Activated naive CD4-positive, alpha-beta T cell treated with anti-CD3 and anti-CD28 coated beads for 36 hours (primary cell): ENCODE measurements at regions of chr11 and their contacts with region 1.

Region 1: DNA sequence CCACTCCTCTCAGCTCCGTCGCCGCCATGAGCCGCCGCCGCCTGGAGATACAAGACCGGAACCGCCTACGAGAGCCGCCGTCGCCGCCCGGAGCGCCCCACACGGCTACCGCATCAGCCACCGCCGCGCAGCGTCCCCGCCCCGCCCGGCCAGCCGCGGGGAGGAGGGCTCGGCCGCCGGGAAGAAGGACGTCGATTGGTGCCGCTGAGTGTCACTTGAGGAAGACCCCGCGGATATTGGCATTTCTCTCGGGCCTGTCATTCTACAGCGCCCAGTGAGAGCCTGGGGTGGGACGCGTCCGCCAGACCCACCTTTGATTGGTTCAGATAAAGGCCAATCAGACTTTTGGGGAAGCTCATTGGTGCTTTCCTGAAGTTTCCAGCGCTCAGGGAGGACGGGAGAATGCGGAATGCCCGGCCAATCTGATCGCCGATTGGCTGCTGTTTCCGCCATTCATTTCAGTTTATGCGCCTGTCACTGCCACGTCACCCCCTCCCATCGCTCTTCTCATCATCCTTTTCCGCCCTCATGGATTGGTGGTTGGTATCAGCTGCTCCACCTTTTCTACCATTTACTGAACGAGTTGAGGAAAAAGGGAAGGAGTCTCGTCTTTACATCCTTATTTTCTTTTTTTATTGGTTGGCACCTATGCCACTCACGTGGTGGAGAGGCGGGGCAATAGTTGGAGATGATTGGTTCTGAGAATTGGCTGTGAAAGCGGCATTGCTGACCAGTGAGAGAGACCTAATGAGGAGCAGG is at the start of gene OSBP:
- DNase-seq: peak; percentile 99
- H3K4me3 Mint-ChIP-seq: peak within 1 kb of the TSS; percentile 81
- H3K27ac Mint-ChIP-seq: peak within 1 kb of the TSS; percentile 86
- H3K4me1 Mint-ChIP-seq: peaks cover 35% of the 10 kb centered on the region
- H3K27me3 Mint-ChIP-seq: no peaks in the 10 kb centered on the region
- total RNA-seq, gene OSBP: 33.9 to 37.0 TPM

Region 2: GRCh38 chr11:59542142-59542810 is 73.5 kb before region 1 on chr11:
- CTCF ChIA-PET with region 1: no interaction called
- intact Hi-C with region 1: loop called (anchors 1 kb)
- DNase-seq: no peak
- H3K4me3 Mint-ChIP-seq: no peak overlapping the region
- H3K27ac Mint-ChIP-seq: no peak overlapping the region
- H3K4me1 Mint-ChIP-seq: peaks cover 11% of the 10 kb centered on the region
- H3K27me3 Mint-ChIP-seq: no peaks in the 10 kb centered on the region

Region 3: DNA sequence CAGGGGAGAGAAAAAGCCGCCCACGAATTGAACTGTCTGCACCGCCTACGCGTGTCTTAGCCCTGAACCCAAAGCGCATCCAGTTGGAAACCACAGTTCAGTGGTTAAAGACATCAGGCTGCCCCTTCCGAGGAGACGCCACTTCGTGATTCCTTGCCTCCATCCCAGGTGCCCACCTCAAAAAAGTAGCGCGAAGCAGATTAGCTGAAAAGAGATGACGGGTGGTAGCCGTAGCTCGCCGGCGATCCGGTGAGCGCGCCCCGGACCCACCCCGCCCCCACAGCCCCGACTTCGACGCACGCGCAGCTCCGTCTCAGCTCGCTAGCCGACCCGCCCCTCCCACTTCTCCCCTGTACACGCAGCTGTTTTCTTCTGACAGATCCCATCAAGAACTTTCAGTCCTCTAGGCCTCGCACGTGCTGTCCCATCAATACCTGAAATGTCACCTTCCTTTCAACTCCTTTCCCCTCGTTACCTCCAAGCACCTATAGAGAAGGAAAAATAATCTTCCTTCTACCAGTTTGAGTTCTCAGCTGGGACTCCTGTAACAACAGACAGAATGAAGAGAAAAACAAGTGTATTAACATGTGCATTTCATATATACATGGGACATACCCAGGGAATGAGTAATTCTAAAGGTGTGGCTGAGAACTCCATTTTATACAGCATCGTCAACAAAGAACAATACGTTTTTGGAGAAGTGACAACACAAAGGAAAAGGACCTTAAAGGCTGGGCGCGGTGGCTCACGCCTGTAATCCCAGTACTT is 54.9 kb before region 1 on chr11:
- CTCF ChIA-PET with region 1: interaction called, 5 read pairs
- intact Hi-C with region 1: loop called (anchors 1 kb)
- DNase-seq: peak; percentile 90
- H3K4me3 Mint-ChIP-seq: peak overlapping the region; percentile 93
- H3K27ac Mint-ChIP-seq: peak overlapping the region; percentile 97
- H3K4me1 Mint-ChIP-seq: peaks cover 47% of the 10 kb centered on the region
- H3K27me3 Mint-ChIP-seq: peaks cover 4% of the 10 kb centered on the region

Region 4: DNA sequence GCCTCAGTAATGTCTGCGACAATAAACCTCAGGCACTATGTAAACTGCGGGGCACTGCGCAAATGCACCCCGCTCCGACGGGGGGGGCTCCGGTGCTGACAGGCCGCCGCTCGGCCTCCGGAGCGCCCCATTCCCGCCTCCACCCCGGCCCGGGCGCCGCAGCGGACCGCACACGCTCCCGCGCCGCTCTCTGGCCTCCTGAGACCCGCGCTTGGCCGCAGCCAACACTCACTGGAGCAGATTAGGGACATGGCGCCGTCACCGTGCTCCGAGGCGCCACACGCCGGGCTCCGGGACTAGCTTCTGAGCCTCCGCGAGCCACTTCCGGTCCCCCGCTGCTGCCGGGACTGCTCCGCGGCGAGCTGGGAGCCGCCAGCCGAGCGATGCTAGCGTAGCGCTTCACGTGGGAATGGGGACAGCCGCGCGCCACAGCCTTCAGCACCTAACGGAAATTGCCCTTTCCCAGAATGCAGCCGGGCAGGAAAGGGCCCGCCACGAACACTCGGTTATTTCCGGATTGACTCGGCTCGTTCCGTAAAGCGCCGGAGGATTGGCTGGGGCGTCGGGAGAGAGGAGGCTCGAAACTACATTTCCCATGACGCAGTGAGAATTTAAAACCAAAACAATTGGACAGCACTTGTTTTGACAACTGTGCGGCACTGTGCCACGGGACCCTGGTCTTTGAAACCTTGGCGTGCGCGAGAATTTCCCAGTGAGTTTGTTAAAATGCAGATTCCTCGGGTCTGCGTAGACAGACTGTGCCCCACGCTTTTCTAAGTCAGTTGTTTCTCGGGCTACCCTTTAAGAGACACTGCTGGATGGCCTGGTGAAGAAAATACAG is 1290.5 kb after region 1 on chr11 and contains the start of gene PRPF19:
- CTCF ChIA-PET with region 1: interaction called, 3 read pairs
- intact Hi-C with region 1: loop called (anchors 5 kb)
- DNase-seq: peak; percentile 100
- H3K4me3 Mint-ChIP-seq: peak within 1 kb of the TSS; percentile 80
- H3K27ac Mint-ChIP-seq: peak within 1 kb of the TSS; percentile 92
- H3K4me1 Mint-ChIP-seq: peaks cover 40% of the 10 kb centered on the region
- H3K27me3 Mint-ChIP-seq: no peaks in the 10 kb centered on the region
- total RNA-seq, gene PRPF19: 108 to 119 TPM